Right ventricle myocardium inferior (tissue), 1 donor: ENCODE measurements at regions of chr14 and their contacts with region 1.

Region 1: GRCh38 chr14:52091928-52092327 is 23.1 kb upstream of the NID2 start:
- DNase-seq: no peak
- ATAC-seq: peak; percentile 65

Region 2: DNA sequence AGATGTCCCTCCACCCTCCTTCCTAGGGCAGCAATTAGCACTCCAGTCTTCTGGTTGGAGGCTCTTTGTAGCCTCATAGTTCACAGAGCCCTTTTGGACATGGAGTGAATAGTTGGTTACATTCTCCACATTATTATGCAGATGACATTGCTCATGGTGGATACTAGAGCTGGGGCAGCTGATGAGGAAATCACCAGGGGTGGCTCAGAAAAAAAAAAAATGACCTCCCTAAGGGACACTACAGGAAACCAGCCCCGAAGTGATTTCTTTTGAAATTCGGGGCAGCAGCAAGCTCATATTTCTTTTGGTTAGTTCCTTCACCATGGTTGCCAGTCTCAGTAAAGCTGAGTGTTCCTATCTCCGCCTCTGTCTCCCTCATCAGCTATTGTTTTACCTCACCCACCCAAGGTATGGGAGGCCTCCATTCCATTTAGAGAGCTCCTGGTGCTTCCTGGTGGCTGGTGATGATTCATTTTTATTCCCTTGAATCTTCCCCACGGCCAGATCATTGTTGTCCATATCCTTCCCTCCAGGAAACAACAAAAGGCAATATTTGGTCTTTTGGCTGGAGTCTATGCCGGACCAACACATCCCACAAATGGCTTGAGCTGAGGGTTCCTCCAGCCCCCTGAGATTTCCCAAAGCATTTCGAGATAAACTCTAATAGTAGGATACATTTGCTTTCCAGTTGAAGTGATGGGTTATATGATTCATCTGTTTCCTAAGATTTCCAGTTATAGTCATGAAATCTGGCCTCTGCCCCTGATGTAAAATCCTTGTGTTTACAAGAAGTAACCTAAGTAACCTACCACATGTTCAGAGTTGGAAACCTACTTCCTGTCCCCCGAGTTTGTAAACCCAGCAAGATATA is 33.1 kb after region 1 on chr14:
- intact Hi-C with region 1: loop called (anchors 2 kb)
- DNase-seq: no peak
- ATAC-seq: peak; percentile 76